K562 (cell line): ENCODE measurements at regions of chr10 and their contacts with region 1.

Region 1: DNA sequence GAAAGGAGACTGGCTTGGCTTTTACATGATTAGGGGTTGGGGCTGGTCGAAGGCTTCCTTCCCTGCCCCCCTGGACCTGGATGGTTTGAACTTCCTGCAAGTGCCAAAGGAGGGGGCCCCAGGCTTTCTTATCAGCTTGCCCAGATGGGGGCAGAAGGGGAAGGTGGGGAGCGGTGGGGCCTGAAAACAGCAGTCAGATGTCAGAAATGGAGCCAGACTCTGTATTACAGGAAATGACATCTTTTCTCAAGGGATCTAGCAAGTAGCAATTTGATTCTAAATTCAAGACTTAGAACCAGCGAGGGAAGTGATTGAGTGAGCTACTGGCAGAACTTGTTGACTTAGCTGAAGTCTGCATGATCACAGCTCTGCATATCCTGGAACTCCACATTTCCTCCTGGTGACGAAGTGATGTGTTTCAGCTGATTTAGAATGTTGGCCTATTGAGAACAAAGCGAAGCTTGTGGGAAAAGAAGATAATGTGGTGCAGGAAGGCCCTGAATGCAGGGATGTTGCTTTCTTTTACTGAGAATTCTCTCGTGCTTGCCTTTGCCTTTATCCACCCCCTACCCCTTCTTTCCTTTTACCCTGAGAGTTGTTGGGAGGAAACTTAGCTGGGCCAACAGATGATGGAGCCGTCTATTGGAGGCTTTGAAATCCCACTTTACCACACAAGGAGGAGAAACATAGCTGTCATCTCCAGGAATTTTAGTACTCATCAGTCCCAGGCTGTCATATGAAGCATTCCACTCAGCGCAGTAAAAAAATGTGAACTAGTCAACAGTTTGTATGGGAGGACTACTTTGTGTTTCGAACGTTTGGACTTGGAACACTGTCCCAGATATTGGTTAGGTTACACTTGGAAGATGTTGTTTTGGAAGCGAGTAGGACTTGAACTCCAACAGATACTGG is 43.2 kb downstream of the CCNY start:
- DNase-seq: peak; percentile 91 to 94 (median 92)
- ATAC-seq: peak; percentile 85
- H3K4me3 ChIP-seq: peak overlapping the region; percentile 27
- H3K27ac ChIP-seq: peak overlapping the region; percentile 96
- H3K4me1 ChIP-seq: peaks cover 25 to 65% of the 10 kb centered on the region in 2 experiments
- H3K27me3 ChIP-seq: no peaks in the 10 kb centered on the region
- CTCF ChIP-seq: peak; percentile 30 to 60 (median 59); a peak in 4 of 6 replicates
- EP300 ChIP-seq: peak; percentile 91
- POLR2A ChIP-seq: no peak
- RAD21 ChIP-seq: peak; percentile 57 to 64

Region 2: DNA sequence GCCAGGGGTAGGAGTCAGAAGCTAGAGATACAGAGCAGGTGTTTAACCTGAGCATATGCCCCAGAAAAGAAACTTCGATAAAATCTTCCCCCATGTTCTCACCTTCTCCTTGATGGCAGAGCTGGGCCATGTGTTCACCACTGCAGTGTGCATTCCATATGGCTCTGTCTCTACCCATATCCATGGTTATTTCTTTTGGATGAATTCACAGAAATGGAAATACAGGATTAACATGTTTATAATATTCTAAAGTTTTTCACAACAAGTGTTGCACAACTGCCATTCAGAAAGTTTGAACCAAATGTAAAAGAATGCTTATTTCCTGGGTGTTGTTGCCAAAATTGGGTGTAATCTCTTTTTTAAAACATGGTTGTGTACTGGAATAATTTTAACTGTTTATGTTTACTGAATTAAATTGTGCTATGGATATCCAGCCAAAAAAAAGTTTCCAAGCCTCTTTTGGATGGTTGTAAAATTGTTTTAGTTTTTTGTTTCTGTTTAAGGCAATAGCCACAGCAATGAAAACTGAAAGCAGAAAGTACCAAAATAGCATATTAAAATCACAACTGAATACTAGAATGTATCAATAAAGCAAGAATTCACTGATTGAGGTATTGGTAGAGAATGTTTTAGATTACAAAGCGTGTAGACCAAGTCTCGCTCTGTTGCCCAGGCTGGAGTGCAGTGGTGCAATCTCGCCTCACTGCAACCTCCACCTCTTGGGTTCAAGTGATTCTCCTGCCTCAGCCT is 63.1 kb before region 1 on chr10:
- CTCF ChIA-PET with region 1: no interaction called
- POLR2A ChIA-PET with region 1: no interaction called
- in situ Hi-C with region 1: no loop called
- intact Hi-C with region 1: no loop called
- DNase-seq: no peak
- ATAC-seq: no peak
- H3K4me3 ChIP-seq: no peak overlapping the region
- H3K27ac ChIP-seq: no peak overlapping the region
- H3K4me1 ChIP-seq: no peaks in the 10 kb centered on the region
- H3K27me3 ChIP-seq: no peaks in the 10 kb centered on the region
- CTCF ChIP-seq: no peak
- EP300 ChIP-seq: no peak
- POLR2A ChIP-seq: no peak
- RAD21 ChIP-seq: no peak

Region 3: DNA sequence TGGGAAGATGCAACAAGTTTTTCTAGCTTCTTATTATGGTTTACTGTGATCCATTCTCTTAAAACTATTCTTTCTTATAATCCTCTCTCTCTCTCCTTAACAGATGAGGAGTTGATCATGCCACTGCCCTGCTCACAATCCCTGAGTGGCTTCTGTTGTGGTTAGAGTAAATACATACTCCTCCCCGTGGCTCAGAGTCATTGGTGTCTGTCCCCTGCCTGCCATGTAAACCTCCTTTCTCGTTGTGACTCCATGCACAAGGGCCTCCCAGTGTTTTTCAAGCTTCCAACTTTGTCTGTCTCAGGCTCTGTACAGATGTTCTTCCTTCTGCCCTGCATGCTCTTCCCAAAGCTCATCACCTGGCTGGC is 22.8 kb before region 1 on chr10:
- CTCF ChIA-PET with region 1: no interaction called
- POLR2A ChIA-PET with region 1: no interaction called
- in situ Hi-C with region 1: no loop called
- intact Hi-C with region 1: no loop called
- DNase-seq: no peak
- ATAC-seq: no peak
- H3K4me3 ChIP-seq: no peak overlapping the region
- H3K27ac ChIP-seq: no peak overlapping the region
- H3K4me1 ChIP-seq: peaks cover 12 to 32% of the 10 kb centered on the region in 2 experiments; a peak in 4 of 5 replicates
- H3K27me3 ChIP-seq: no peaks in the 10 kb centered on the region
- CTCF ChIP-seq: no peak
- EP300 ChIP-seq: no peak
- POLR2A ChIP-seq: no peak
- RAD21 ChIP-seq: no peak

Region 4: GRCh38 chr10:35394411-35394851 is 14.9 kb after region 1 on chr10:
- CTCF ChIA-PET with region 1: no interaction called
- POLR2A ChIA-PET with region 1: interaction called, 14 read pairs
- in situ Hi-C with region 1: no loop called
- intact Hi-C with region 1: loop called (anchors 1 kb)
- DNase-seq: no peak
- ATAC-seq: no peak
- H3K4me3 ChIP-seq: no peak overlapping the region
- H3K27ac ChIP-seq: peak overlapping the region; percentile 23; the same call in 1 of the 3 replicates
- H3K4me1 ChIP-seq: peaks cover 25 to 97% of the 10 kb centered on the region in 2 experiments
- H3K27me3 ChIP-seq: no peaks in the 10 kb centered on the region
- CTCF ChIP-seq: no peak
- EP300 ChIP-seq: no peak
- POLR2A ChIP-seq: no peak
- RAD21 ChIP-seq: no peak

Region 5: DNA sequence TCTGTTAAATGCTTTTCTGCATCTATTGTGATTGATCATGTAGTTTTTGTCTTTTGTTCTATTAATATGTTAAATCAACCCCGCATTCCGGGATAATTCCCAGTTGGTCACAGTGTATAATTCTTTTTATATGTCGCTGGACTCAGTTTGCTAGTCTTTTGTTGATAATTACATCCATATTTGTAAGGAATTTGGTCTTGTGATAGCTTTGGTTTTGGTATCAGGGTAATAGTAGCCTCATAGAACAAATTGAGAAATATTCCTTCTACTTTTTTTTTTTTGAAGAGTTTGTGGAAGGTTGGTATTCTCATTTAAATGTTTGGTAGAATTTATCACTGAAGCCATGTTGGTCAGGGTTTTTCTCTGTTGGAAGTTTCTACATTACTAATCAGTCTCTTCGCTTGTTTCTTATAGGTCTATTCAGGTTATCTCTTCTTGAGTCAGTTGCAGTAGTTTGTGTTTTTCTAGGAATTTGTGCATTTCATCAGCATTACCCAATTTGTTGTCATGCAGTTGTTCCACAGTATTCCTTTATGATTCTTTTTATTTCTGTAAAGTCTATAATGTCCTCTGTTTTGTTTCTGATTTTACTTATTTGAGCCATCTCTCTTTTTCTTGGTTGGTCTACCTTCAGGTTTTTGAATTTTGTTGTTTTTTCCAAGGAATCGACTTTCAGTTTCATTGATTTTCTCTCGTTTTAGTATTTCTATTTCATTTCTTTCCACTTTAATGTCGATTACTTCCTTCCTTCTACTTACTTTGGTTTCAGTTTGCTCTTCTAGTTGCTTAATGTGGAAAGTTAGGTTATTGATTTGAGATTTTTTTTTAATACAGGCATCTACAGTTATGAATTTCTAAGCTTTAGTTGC is 161.0 kb after region 1 on chr10:
- CTCF ChIA-PET with region 1: no interaction called
- POLR2A ChIA-PET with region 1: no interaction called
- in situ Hi-C with region 1: no loop called
- intact Hi-C with region 1: loop called (anchors 5 kb)
- DNase-seq: peak in 1 of 4 experiments; percentile 13
- ATAC-seq: peak; percentile 77
- H3K4me3 ChIP-seq: no peak overlapping the region
- H3K27ac ChIP-seq: peak overlapping the region; percentile 47; the same call in 1 of the 3 replicates
- H3K4me1 ChIP-seq: peaks cover 0 to 6% of the 10 kb centered on the region in 2 experiments; a peak in 3 of 5 replicates
- H3K27me3 ChIP-seq: no peaks in the 10 kb centered on the region
- CTCF ChIP-seq: no peak
- EP300 ChIP-seq: peak; percentile 67
- POLR2A ChIP-seq: no peak
- RAD21 ChIP-seq: no peak

Region 6: GRCh38 chr10:35563261-35563891 is 183.9 kb after region 1 on chr10:
- CTCF ChIA-PET with region 1: interaction called, 3 read pairs
- POLR2A ChIA-PET with region 1: no interaction called
- in situ Hi-C with region 1: no loop called
- intact Hi-C with region 1: loop called (anchors 5 kb)
- DNase-seq: peak; percentile 73 to 84 (median 76)
- ATAC-seq: peak; percentile 92
- H3K4me3 ChIP-seq: no peak overlapping the region
- H3K27ac ChIP-seq: no peak overlapping the region
- H3K4me1 ChIP-seq: peaks cover 0 to 4% of the 10 kb centered on the region in 2 experiments; a peak in 2 of 5 replicates
- H3K27me3 ChIP-seq: no peaks in the 10 kb centered on the region
- CTCF ChIP-seq: peak; percentile 90 to 99 (median 94)
- EP300 ChIP-seq: no peak
- POLR2A ChIP-seq: no peak
- RAD21 ChIP-seq: peak; percentile 49 to 73